GM12878 (cell line): ENCODE measurements at regions of chr1 and their contacts with region 1.

Region 1: GRCh38 chr1:205977402-205978014 is 25.7 kb downstream of the RAB7B start:
- DNase-seq: peak; percentile 23
- ATAC-seq: peak; percentile 98
- H3K4me3 ChIP-seq: no peak overlapping the region
- H3K27ac ChIP-seq: no peak overlapping the region
- H3K4me1 ChIP-seq: no peaks in the 10 kb centered on the region
- H3K27me3 ChIP-seq: no peaks in the 10 kb centered on the region; a peak in 1 of 4 replicates
- CTCF ChIP-seq: peak; percentile 90 to 98 (median 93)
- EP300 ChIP-seq: no peak
- POLR2A ChIP-seq: no peak
- RAD21 ChIP-seq: peak; percentile 99

Region 2: DNA sequence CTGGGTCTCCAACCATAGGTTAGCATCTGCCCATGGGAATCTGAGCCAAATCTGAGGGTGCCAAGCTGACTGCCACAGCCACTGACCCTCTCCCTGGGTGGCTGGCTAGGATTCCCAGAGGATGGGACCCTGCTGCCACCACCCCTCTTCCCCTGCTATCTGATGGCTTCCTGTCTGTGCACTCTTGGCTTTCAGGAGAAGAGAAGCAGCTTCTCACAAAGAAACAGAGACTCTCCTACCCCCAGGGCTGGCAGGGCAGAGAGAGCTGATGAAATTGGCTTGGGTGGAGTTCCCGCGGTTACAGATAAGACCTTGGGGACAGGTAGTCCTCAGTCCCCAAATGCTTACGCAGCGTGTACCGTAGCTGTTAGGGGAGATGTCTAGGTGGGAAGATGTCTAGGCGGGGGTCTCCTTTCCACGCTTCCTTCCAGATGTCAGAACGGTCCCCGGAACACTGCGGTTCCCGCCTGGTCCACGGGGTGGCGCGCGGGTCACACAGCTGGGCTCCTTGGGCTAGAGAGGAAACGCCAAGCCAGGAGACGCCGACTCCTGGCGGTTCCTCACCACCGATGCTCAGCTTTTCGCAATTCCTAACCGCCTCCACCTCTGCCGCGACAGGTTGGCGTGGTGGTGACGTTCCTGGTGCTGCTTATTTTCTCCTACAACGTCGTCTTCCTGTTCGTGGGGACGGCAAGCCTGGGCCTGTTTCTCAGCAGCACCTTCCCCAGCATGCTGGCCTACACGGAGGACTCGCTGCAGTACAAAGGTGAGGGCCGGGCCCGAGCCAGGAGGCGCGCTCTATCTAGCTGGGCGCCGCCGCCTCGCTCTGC is 385.8 kb before region 1 on chr1:
- CTCF ChIA-PET with region 1: interaction called, 17 read pairs
- POLR2A ChIA-PET with region 1: no interaction called
- RAD21 ChIA-PET with region 1: interaction called, 21 read pairs
- SMC1A ChIA-PET with region 1: interaction called, 7 read pairs
- in situ Hi-C with region 1: no loop called
- intact Hi-C with region 1: loop called (anchors 5 kb)
- DNase-seq: peak; percentile 59
- ATAC-seq: peak; percentile 79
- H3K4me3 ChIP-seq: peak overlapping the region; percentile 66; the same call in 1 of the 2 replicates
- H3K27ac ChIP-seq: peak overlapping the region; percentile 71
- H3K4me1 ChIP-seq: peaks cover 36% of the 10 kb centered on the region
- H3K27me3 ChIP-seq: no peaks in the 10 kb centered on the region
- CTCF ChIP-seq: peak; percentile 98 to 99 (median 99); a peak in 5 of 6 replicates
- EP300 ChIP-seq: no peak
- POLR2A ChIP-seq: peak; percentile 69
- RAD21 ChIP-seq: peak; percentile 96

Region 3: DNA sequence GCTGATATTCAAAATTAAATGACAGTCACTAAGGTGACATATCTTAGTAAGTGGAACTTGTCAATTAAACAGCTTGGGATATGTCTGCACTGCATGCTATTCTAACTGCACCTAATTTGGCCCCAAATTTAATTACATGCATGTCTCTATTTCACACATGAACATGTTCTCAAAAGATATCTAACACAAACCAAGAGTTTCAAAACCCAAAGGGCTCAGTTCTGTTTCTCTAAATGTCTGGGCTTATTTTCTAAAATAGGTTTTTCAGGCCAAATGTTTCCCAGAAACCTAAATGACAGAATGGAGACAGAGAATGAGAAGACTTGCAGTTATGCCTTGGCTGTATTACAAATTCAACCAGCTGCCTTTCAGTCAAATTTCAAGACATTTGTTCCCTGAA is 213.5 kb before region 1 on chr1:
- CTCF ChIA-PET with region 1: no interaction called
- POLR2A ChIA-PET with region 1: no interaction called
- RAD21 ChIA-PET with region 1: no interaction called
- SMC1A ChIA-PET with region 1: no interaction called
- in situ Hi-C with region 1: no loop called
- intact Hi-C with region 1: no loop called
- DNase-seq: no peak
- ATAC-seq: peak; percentile 21; the same call in 2 of the 3 replicates
- H3K4me3 ChIP-seq: no peak overlapping the region
- H3K27ac ChIP-seq: no peak overlapping the region
- H3K4me1 ChIP-seq: peaks cover 4% of the 10 kb centered on the region; the same call in 1 of the 2 replicates
- H3K27me3 ChIP-seq: no peaks in the 10 kb centered on the region
- CTCF ChIP-seq: no peak
- EP300 ChIP-seq: no peak
- POLR2A ChIP-seq: no peak
- RAD21 ChIP-seq: no peak

Region 4: GRCh38 chr1:205775015-205775716 is 202.3 kb before region 1 on chr1 and contains the start of gene RAB29:
- CTCF ChIA-PET with region 1: interaction called, 13 read pairs
- POLR2A ChIA-PET with region 1: interaction called, 4 read pairs
- RAD21 ChIA-PET with region 1: interaction called, 5 read pairs
- SMC1A ChIA-PET with region 1: interaction called, 4 read pairs
- in situ Hi-C with region 1: no loop called
- intact Hi-C with region 1: no loop called
- DNase-seq: peak; percentile 57
- ATAC-seq: peak; percentile 83
- H3K4me3 ChIP-seq: peak within 1 kb of the TSS; percentile 88
- H3K27ac ChIP-seq: peak within 1 kb of the TSS; percentile 63
- H3K4me1 ChIP-seq: peaks cover 12% of the 10 kb centered on the region
- H3K27me3 ChIP-seq: no peaks in the 10 kb centered on the region
- CTCF ChIP-seq: no peak
- EP300 ChIP-seq: peak in 1 of 2 experiments; percentile 46; a peak in 1 of 4 replicates
- POLR2A ChIP-seq: peak; percentile 50; the same call in 1 of the 2 replicates
- RAD21 ChIP-seq: no peak
- polyA plus RNA-seq, gene RAB29: 12.6 to 16.2 TPM

Region 5: DNA sequence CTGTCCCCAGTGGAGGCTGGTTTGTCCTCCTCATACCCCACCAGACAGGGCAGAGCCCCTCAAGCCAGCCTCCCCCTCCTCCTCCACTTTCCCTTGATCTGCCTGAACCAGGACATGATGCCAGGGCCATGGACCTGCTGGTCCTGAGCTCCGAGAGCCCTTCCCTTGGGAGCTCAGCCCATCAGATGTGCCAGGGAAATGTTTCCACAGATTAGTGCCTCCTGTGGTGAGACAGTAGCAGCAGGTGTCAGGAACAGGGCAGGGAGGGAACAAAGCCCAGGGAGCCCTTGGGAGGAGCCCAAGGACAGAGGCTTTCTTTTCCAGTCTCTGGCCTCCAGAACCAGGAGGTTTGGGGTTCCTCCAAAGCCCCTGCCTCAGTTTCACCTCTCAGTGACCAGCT is 149.9 kb before region 1 on chr1:
- CTCF ChIA-PET with region 1: interaction called, 11 read pairs
- POLR2A ChIA-PET with region 1: no interaction called
- RAD21 ChIA-PET with region 1: interaction called, 5 read pairs
- SMC1A ChIA-PET with region 1: no interaction called
- in situ Hi-C with region 1: no loop called
- intact Hi-C with region 1: no loop called
- DNase-seq: no peak
- ATAC-seq: no peak
- H3K4me3 ChIP-seq: no peak overlapping the region
- H3K27ac ChIP-seq: no peak overlapping the region
- H3K4me1 ChIP-seq: no peaks in the 10 kb centered on the region; the same call in 1 of the 2 replicates
- H3K27me3 ChIP-seq: peaks cover 0 to 6% of the 10 kb centered on the region in 2 experiments; a peak in 3 of 4 replicates
- CTCF ChIP-seq: no peak
- EP300 ChIP-seq: no peak
- POLR2A ChIP-seq: no peak
- RAD21 ChIP-seq: no peak

Region 6: DNA sequence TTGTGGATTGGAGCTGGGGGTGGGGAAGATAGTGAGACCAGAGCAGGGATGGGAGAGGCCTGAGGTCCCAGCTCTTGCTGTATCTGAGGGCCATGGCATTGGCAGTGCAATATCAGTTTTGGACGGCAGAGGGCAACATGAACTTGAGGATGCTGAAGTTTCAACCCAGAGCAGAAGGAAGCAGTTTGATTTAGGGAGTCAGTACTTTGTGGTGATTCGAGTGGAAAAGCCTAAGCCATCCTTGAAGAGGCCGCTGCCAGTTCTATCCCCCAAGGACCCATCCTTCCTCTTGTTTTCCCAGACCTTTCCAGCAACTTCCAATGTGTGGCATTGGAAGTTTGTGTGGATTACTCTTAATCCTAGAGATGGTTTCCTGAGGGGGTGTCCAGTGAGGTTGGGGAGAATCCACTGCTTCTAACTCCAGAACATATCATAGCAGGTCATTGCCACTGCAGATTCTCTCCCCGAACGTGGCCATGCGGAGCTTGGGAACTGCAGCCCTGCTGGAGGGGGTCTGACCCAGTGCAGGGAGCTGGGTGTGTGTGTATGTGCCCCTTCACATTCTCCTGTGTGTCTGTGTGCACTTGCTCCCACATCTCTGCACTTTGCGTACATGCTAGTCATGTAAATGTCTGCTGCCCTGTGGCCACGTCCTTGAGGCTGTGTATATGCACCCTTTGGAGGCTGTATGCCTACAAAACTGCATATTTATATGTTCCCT is 58.3 kb before region 1 on chr1:
- CTCF ChIA-PET with region 1: interaction called, 230 read pairs
- POLR2A ChIA-PET with region 1: interaction called, 5 read pairs
- RAD21 ChIA-PET with region 1: interaction called, 158 read pairs
- SMC1A ChIA-PET with region 1: interaction called, 110 read pairs
- in situ Hi-C with region 1: no loop called
- intact Hi-C with region 1: loop called (anchors 1 kb)
- DNase-seq: peak; percentile 24
- ATAC-seq: peak; percentile 94
- H3K4me3 ChIP-seq: no peak overlapping the region
- H3K27ac ChIP-seq: no peak overlapping the region
- H3K4me1 ChIP-seq: no peaks in the 10 kb centered on the region; the same call in 1 of the 2 replicates
- H3K27me3 ChIP-seq: peaks cover 2 to 4% of the 10 kb centered on the region in 2 experiments; a peak in 2 of 4 replicates
- CTCF ChIP-seq: peak; percentile 90 to 93 (median 93)
- EP300 ChIP-seq: no peak
- POLR2A ChIP-seq: no peak
- RAD21 ChIP-seq: peak; percentile 91

Region 7: GRCh38 chr1:205998457-205999241 is 21.1 kb after region 1 on chr1:
- CTCF ChIA-PET with region 1: interaction called, 10 read pairs
- POLR2A ChIA-PET with region 1: no interaction called
- RAD21 ChIA-PET with region 1: no interaction called
- SMC1A ChIA-PET with region 1: interaction called, 4 read pairs
- in situ Hi-C with region 1: no loop called
- intact Hi-C with region 1: no loop called
- DNase-seq: no peak
- ATAC-seq: no peak
- H3K4me3 ChIP-seq: no peak overlapping the region
- H3K27ac ChIP-seq: no peak overlapping the region
- H3K4me1 ChIP-seq: peaks cover 6% of the 10 kb centered on the region
- H3K27me3 ChIP-seq: peaks cover 1 to 2% of the 10 kb centered on the region in 2 experiments; a peak in 2 of 4 replicates
- CTCF ChIP-seq: no peak
- EP300 ChIP-seq: no peak
- POLR2A ChIP-seq: no peak
- RAD21 ChIP-seq: no peak

Region 8: DNA sequence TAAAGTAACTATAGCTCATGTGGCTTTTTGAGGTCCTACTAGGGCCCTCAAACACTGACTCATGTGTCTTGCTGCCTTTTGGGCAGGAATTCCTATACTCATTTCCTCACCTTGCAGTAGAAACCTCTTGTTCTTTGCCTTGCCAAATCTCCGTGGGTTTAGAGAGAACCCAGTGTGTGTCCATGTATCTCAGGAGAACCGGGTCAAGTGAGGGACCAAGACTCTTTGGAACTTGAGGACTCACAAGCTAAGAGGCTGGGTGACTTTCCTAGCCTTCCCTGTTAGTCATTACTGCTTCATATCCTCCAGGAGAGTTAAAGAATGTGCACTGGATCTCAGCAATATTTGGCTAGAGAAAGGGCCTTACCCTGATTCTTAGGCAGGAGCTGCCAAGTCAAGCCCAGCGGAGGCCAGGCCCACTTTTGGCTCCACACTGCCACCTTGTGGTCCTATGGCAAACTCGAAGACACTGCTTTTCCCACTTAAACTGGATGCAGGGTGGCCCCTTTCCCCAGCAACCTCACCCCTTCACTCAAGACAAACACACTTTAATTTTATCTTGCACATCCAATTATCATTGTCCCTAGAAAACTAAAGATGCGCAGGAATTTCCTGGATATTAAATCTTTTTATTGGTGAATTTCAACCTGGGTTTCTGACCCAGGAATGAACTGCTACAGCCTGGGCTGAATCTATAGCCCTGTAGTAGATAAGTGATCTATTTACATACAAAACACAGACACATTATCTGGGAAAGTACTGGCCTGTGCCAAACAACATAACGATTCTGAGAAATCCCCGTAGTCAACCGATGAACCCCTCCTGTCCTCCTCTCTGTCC is 129.0 kb after region 1 on chr1:
- CTCF ChIA-PET with region 1: interaction called, 296 read pairs
- POLR2A ChIA-PET with region 1: no interaction called
- RAD21 ChIA-PET with region 1: interaction called, 197 read pairs
- SMC1A ChIA-PET with region 1: interaction called, 17 read pairs
- in situ Hi-C with region 1: loop called (anchors 5 kb)
- intact Hi-C with region 1: no loop called
- DNase-seq: peak; percentile 39
- ATAC-seq: peak; percentile 98
- H3K4me3 ChIP-seq: no peak overlapping the region
- H3K27ac ChIP-seq: no peak overlapping the region
- H3K4me1 ChIP-seq: no peaks in the 10 kb centered on the region
- H3K27me3 ChIP-seq: peaks cover 0 to 2% of the 10 kb centered on the region in 2 experiments; a peak in 2 of 4 replicates
- CTCF ChIP-seq: peak; percentile 83 to 96 (median 87)
- EP300 ChIP-seq: no peak
- POLR2A ChIP-seq: no peak
- RAD21 ChIP-seq: peak; percentile 98